Activated CD4-positive, alpha-beta T cell treated with anti-CD3 and anti-CD28 coated beads for 36 hours (primary cell): ENCODE measurements at regions of chrX and their contacts with region 1.

Region 1: DNA sequence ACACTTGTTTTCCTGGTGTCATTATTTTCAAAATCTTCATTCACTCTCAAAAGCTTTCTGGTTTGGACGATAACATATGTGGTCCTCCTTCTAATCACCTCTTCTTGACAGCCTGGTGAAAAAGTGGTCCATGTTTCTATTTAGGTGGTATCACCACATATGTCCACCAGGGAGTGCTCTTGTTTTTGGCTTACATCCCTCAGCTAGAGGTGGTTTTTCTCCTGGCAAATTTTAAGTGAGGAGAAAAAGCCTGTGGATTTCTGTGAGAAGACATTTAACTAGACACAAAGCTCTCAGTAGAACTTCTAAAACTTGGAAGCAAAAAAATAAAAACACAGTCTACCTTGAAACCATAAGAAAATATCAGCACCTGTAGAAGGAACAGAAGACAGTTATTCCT is 58.0 kb upstream of the FRMPD4 start:
- DNase-seq: no peak
- ATAC-seq: no peak
- H3K4me3 Mint-ChIP-seq: no peak overlapping the region
- H3K27ac Mint-ChIP-seq: no peak overlapping the region
- H3K4me1 Mint-ChIP-seq: no peaks in the 10 kb centered on the region
- H3K27me3 Mint-ChIP-seq: peaks cover 6% of the 10 kb centered on the region

Region 2: GRCh38 chrX:11757719-11758399 is 322.4 kb before region 1 on chrX and contains the start of gene MSL3:
- CTCF ChIA-PET with region 1: no interaction called
- POLR2A ChIA-PET with region 1: no interaction called
- intact Hi-C with region 1: no loop called
- DNase-seq: peak; percentile 68
- ATAC-seq: peak; percentile 30
- H3K4me3 Mint-ChIP-seq: peak within 1 kb of the TSS; percentile 94
- H3K27ac Mint-ChIP-seq: peak within 1 kb of the TSS; percentile 96
- H3K4me1 Mint-ChIP-seq: peaks cover 10% of the 10 kb centered on the region
- H3K27me3 Mint-ChIP-seq: no peaks in the 10 kb centered on the region
- total RNA-seq, gene MSL3: 51.6 to 54.2 TPM

Region 3: DNA sequence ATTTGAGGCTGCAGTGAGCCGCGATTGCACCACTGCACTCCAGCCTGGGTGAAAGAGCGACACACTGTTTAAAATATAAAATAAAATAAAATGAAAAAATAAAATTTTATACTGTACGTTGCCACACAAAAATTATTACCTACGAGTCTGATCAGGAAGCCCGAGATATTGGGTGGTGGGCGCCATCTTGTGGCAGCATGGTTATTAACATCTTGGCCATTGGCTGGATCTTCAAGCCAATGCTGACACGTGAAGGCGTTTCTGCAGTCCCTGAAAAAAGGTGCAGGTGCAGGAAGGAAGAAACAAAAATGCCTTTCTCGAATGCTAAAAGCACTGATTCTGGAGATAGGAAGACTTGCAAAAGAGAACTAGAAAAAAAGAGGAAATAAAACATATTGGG is 821.2 kb after region 1 on chrX:
- CTCF ChIA-PET with region 1: no interaction called
- POLR2A ChIA-PET with region 1: no interaction called
- intact Hi-C with region 1: loop called in 1 of 2 experiments (anchors 10 kb)
- DNase-seq: peak; percentile 81
- ATAC-seq: peak; percentile 61
- H3K4me3 Mint-ChIP-seq: no peak overlapping the region
- H3K27ac Mint-ChIP-seq: no peak overlapping the region
- H3K4me1 Mint-ChIP-seq: peaks cover 9% of the 10 kb centered on the region
- H3K27me3 Mint-ChIP-seq: no peaks in the 10 kb centered on the region